PC-3 (cell line): ENCODE measurements at regions of chr19 and their contacts with region 1.

Region 1: GRCh38 chr19:57819475-57820148 is 4.9 kb upstream of the ZNF552 start:
- DNase-seq: peak; percentile 98
- ATAC-seq: peak; percentile 86
- H3K4me3 ChIP-seq: peak overlapping the region; percentile 90
- H3K27ac ChIP-seq: peak overlapping the region; percentile 61
- H3K4me1 ChIP-seq: peaks cover 21% of the 10 kb centered on the region
- H3K27me3 ChIP-seq: no peaks in the 10 kb centered on the region
- CTCF ChIP-seq: peak; percentile 34; the same call in 1 of the 2 replicates

Region 2: DNA sequence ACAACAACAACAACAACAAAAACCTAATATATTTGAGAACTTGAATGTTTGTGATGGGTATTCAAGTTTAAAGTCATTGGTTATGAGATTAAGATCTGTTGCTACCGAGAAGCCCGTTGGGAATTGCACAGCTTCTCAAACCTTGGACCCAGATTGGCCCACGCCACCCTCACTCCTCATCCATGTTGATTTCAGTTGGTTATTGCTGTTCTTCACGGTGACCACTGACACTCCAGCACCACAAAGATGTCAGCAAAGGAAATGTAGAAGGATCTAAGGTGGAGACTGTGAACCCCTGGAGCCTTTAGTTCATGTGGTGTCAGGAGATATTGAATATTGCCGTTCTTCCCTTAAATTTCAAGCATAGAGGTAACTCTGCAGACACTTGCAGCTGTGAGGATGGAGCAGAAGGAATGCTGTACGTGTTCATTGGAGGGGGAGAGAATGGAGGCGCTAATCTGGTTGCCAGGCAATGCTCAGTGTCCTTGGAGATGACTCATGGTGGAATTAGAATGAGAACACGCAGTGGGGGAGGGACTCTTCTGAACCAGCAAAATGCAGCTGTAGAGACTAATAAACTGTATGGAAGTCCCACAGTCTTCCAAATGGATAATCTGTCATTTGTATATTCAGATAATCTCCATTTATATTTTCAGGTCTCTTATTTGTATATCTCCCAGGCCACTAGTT is 1127.3 kb before region 1 on chr19:
- CTCF ChIA-PET with region 1: no interaction called
- POLR2A ChIA-PET with region 1: no interaction called
- intact Hi-C with region 1: no loop called
- DNase-seq: no peak
- ATAC-seq: no peak
- H3K4me3 ChIP-seq: no peak overlapping the region
- H3K27ac ChIP-seq: no peak overlapping the region
- H3K4me1 ChIP-seq: no peaks in the 10 kb centered on the region
- H3K27me3 ChIP-seq: no peaks in the 10 kb centered on the region
- CTCF ChIP-seq: no peak

Region 3: DNA sequence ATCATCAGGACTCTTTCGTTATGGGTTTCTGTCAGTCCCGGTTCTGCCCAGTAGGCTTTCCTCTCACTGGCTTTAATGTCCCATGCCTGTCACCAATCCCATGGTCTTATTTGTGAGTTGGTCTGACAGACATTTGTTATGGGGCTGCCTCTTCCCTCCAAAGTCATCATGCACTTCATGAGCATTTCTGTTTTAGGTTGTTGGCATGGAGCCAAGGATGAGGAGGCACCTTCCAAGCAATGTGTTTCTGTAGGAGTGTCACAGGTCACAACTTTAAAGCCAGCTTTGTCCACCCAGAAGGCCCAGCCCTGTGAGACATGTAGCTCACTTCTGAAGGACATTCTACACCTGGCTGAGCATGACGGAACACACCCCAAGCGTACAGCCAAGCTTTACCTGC is 400.2 kb before region 1 on chr19:
- CTCF ChIA-PET with region 1: no interaction called
- POLR2A ChIA-PET with region 1: no interaction called
- intact Hi-C with region 1: no loop called
- DNase-seq: no peak
- ATAC-seq: no peak
- H3K4me3 ChIP-seq: no peak overlapping the region
- H3K27ac ChIP-seq: no peak overlapping the region
- H3K4me1 ChIP-seq: no peaks in the 10 kb centered on the region
- H3K27me3 ChIP-seq: no peaks in the 10 kb centered on the region
- CTCF ChIP-seq: no peak

Region 4: DNA sequence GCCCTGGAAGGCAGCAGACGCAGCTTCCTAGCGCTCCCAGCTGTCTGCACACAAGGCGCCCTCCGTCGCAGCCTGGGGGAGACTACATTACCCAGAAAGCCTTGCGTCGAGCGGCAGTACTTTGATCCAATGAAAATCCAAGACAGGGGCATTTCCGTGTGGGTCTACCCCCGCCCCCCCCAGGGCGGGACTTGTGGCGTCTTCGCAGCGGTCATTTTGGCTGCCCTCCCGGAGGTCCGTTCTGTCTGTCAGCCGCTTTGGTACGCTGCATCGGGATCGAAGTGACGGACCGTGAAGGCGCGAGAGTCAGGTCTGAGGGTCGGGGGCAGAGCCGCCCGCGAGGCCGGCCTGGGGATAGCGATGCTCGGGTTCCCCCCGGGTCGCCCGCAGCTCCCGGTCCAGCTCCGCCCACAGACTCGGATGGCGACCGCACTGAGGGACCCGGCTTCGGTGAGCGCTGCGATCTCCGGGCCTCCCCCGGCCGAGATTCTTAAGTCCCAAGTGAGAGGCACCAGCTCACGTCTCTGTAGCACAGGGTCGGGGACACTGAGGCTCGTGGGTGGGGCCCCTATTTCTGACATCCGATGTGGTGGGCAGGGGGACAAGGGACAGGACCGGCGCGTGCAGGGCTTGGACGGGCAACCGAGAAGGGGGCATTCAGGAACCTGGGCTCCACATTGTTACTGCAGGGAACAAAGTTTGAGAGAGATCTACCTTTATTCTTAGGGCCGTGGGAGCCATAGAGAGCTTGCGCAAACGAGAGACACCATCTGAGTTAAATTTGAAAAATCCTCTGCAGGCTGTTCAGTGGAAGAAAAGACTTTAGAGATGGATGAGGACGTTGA is 186.4 kb before region 1 on chr19 and contains the start of gene ZNF211:
- CTCF ChIA-PET with region 1: no interaction called
- POLR2A ChIA-PET with region 1: no interaction called
- intact Hi-C with region 1: loop called (anchors 10 kb)
- DNase-seq: peak; percentile 97
- ATAC-seq: peak; percentile 99
- H3K4me3 ChIP-seq: peak within 1 kb of the TSS; percentile 86
- H3K27ac ChIP-seq: no peak within 1 kb of the TSS
- H3K4me1 ChIP-seq: peaks cover 6% of the 10 kb centered on the region; the same call in 1 of the 2 replicates
- H3K27me3 ChIP-seq: no peaks in the 10 kb centered on the region
- CTCF ChIP-seq: no peak
- total RNA-seq, gene ZNF211: 9.6 and 10.1 TPM in 2 replicates

Region 5: DNA sequence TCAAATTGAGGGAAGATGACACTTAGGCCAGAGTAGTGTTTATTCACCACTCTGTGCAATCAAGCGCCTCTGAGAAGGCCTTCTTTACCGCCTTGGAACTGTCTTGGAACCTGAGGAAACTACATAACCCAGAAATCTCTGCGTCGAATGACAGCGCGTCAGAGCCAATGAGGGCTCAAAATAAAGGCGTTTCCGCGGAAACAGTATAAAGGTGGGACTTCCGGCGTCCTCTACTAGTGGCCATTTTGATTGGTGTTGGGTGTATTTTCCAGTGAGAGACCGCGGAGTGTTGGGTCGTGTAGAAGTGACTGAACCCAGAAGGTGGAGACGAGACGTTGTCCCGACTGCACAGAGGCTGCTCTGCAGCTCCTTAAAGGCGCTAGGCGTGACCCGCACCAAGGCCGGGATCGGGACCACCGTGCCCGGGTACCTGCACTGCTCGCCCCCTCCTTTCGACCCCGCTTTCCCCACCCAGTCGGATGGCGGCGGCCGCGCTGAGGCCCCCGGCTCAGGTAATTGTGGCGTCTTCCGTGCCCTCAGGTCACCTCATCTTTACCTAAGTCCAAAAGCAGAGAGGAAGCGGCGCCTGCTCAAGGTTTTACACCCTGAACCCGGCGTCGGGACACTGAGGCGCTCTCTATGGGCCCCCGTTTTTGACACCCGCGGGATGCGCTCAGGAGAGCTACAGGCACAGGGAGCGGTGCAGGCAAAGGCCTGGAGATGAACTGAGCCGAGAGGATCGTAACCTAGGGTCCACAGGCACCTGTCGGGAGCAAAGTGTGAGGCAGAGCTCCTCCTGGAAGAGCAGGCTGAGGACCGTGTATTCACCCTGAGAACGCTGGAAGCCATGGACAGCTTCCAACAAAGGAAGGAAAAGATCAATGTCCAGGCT is 72.8 kb before region 1 on chr19 and contains the start of gene ZNF776:
- CTCF ChIA-PET with region 1: no interaction called
- POLR2A ChIA-PET with region 1: no interaction called
- intact Hi-C with region 1: loop called (anchors 2 kb)
- DNase-seq: peak; percentile 96
- ATAC-seq: peak; percentile 99
- H3K4me3 ChIP-seq: peak within 1 kb of the TSS; percentile 92
- H3K27ac ChIP-seq: peak within 1 kb of the TSS; percentile 19; the same call in 1 of the 2 replicates
- H3K4me1 ChIP-seq: peaks cover 8% of the 10 kb centered on the region; the same call in 1 of the 2 replicates
- H3K27me3 ChIP-seq: no peaks in the 10 kb centered on the region
- CTCF ChIP-seq: no peak
- total RNA-seq, gene ZNF776: 14.1 and 17.3 TPM in 2 replicates

Region 6: GRCh38 chr19:57850553-57851017 is 31.0 kb after region 1 on chr19:
- CTCF ChIA-PET with region 1: no interaction called
- POLR2A ChIA-PET with region 1: interaction called, 12 read pairs
- intact Hi-C with region 1: no loop called
- DNase-seq: peak; percentile 73
- ATAC-seq: peak; percentile 41
- H3K4me3 ChIP-seq: peak overlapping the region; percentile 88
- H3K27ac ChIP-seq: peak overlapping the region; percentile 63
- H3K4me1 ChIP-seq: 0 out of 2 replicates have a peak, but pooled peaks cover 6% of the 10 kb centered on the region
- H3K27me3 ChIP-seq: no peaks in the 10 kb centered on the region
- CTCF ChIP-seq: no peak

Region 7: GRCh38 chr19:57867868-57868492 is 48.4 kb after region 1 on chr19:
- CTCF ChIA-PET with region 1: no interaction called
- POLR2A ChIA-PET with region 1: no interaction called
- intact Hi-C with region 1: no loop called
- DNase-seq: no peak
- ATAC-seq: no peak
- H3K4me3 ChIP-seq: no peak overlapping the region
- H3K27ac ChIP-seq: no peak overlapping the region
- H3K4me1 ChIP-seq: no peaks in the 10 kb centered on the region
- H3K27me3 ChIP-seq: no peaks in the 10 kb centered on the region
- CTCF ChIP-seq: no peak

Region 8: DNA sequence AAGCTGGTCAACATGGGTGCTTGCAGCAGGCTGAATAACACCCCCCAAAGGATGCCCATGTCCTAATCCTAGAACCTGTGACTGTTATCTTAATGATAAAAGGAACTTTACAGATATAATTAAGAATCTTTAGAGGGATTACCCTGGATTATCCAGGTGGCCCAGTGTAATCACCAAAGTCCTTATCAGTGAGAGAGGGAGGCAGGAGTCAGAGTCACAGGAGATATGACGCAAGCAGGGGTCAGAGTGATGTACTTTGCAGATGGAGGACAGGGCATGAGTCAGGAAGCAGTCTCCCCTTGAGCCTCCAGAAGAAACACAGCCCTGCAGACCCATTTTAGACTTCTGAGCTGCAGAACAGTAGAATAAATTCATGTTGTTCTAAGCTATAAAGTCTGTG is 173.2 kb after region 1 on chr19:
- CTCF ChIA-PET with region 1: no interaction called
- POLR2A ChIA-PET with region 1: no interaction called
- intact Hi-C with region 1: no loop called
- DNase-seq: no peak
- ATAC-seq: no peak
- H3K4me3 ChIP-seq: no peak overlapping the region
- H3K27ac ChIP-seq: no peak overlapping the region
- H3K4me1 ChIP-seq: no peaks in the 10 kb centered on the region
- H3K27me3 ChIP-seq: no peaks in the 10 kb centered on the region
- CTCF ChIP-seq: no peak

Region 9: DNA sequence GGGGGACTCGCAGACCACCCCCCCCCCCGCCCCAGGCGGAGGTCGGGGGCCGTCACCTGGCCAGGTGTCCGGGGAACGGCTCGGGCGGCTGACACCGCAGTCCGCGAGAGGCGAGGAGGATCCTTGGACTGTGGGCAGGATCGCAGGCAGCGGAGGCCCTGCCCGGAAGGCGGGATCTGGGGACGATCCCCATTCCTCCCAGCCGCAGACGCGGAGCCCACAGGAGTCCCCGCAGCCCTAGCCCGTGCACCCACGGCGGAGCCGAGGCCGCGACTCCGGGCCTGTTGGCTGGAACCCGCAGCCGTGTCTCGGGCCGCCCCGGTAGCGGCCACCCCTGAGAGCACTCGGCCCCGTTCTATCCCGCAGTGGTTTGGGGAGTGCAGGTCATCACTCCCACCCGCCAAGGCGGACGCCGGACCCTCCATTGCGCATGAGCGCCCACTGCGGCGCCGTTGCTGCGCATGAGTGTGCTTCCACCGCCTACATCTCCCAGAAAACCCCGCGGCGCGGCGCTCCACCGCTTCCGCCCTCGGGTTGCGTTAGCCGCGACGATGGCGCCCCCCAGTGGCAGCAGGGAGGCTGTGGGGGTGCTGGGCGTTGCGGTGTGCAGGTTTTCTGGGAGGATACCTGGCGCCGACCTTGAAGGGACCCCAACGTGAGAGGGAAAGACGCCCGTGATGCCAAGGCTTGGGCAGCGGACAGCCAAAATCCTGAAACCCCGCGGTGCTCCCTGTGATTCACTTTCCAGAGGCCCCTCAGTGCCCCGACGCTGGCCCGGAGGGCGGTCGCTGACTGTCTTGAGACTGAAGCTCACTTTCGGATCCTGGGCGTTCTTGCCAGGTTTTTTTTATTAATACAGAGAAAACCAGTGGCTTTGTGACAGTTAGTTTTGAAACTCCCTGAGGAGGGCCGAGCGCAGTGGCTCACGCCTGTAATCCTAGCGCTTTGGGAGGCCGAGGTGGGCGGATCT is 335.4 kb after region 1 on chr19:
- CTCF ChIA-PET with region 1: no interaction called
- POLR2A ChIA-PET with region 1: no interaction called
- intact Hi-C with region 1: loop called (anchors 10 kb)
- DNase-seq: peak; percentile 89
- ATAC-seq: peak; percentile 83
- H3K4me3 ChIP-seq: peak overlapping the region; percentile 77
- H3K27ac ChIP-seq: no peak overlapping the region
- H3K4me1 ChIP-seq: no peaks in the 10 kb centered on the region
- H3K27me3 ChIP-seq: no peaks in the 10 kb centered on the region
- CTCF ChIP-seq: peak; percentile 82